ENCODE measurements at regions of chr6 and their contacts with region 1.

Region 1: GRCh38 chr6:75620381-75621304 is 19.0 kb downstream of the SENP6 start:
- DNase-seq: no peak
- ATAC-seq: peak; percentile 20
- H3K4me3 ChIP-seq: no peak overlapping the region
- H3K4me3 Mint-ChIP-seq: peak overlapping the region; percentile 30
- H3K27ac ChIP-seq: peak overlapping the region in 1 of 2 experiments; percentile 6
- H3K27ac Mint-ChIP-seq: peak overlapping the region; percentile 85
- H3K4me1 ChIP-seq: peaks cover 33% of the 10 kb centered on the region
- H3K4me1 Mint-ChIP-seq: peaks cover 67% of the 10 kb centered on the region
- H3K27me3 ChIP-seq: no peaks in the 10 kb centered on the region
- H3K27me3 Mint-ChIP-seq: no peaks in the 10 kb centered on the region
- CTCF ChIP-seq: no peak

Region 2: DNA sequence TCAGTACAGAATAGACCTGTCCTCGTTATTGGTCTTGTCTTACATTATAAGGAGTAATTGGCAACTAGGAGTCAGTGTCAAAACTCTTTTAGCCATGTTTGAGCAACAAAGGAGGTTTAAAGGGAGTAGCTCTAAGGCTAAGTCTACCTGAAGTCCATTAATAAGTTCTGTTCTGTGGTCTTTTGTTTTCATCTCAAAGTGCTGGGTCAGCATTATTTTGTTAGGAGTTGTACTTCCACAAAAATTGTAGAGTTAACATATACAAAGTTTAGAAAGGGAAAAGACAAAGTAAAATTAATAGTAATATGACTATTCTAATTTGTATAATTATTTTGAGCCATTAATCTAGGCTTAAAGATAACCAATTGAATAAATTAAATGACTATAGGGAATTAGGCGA is 31.7 kb before region 1 on chr6:
- CTCF ChIA-PET with region 1: interaction called, 3 read pairs
- POLR2A ChIA-PET with region 1: no interaction called
- intact Hi-C with region 1: loop called (anchors 5 kb)
- DNase-seq: no peak
- ATAC-seq: no peak
- H3K4me3 ChIP-seq: no peak overlapping the region
- H3K4me3 Mint-ChIP-seq: no peak overlapping the region
- H3K27ac ChIP-seq: no peak overlapping the region
- H3K27ac Mint-ChIP-seq: no peak overlapping the region
- H3K4me1 ChIP-seq: no peaks in the 10 kb centered on the region
- H3K4me1 Mint-ChIP-seq: no peaks in the 10 kb centered on the region
- H3K27me3 ChIP-seq: no peaks in the 10 kb centered on the region
- H3K27me3 Mint-ChIP-seq: no peaks in the 10 kb centered on the region
- CTCF ChIP-seq: no peak

Region 3: DNA sequence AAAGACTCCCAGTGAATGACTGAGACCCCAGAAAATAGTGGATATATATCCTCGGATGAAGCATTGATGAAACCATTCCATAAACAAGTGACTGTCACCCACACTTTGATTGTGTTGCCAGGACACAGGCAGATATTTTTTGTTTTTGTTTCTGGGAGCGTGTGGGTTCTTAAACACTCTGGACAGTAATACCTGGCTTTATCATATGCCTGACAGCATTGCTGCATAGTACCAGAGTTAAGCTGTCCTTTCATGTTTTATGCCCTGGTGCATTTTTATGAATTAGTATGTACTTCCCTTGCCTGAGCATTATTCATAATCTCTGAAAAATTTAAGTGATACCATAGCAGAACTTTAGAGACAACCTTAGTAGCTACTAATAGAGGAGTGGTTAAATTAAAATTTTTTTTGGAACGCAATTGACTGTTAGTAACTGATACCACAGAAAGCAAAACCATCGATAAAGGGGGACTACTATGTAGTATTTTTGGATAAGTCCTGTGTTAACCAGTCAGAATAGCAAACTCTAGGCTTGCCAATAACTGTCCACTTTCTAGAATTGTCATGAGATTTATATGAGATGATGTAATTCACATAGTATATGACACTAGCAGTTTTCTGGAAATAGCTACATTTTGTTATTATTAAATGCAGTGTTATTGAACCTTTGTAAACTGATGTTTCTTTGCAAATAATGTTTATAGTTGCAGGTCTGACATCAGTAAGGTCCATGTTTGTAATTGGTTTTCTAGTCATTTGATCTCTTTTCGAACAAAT is 11.4 kb after region 1 on chr6:
- CTCF ChIA-PET with region 1: interaction called, 4 read pairs
- POLR2A ChIA-PET with region 1: no interaction called
- intact Hi-C with region 1: loop called in 1 of 2 experiments (anchors 2 kb)
- DNase-seq: no peak
- ATAC-seq: no peak
- H3K4me3 ChIP-seq: no peak overlapping the region
- H3K4me3 Mint-ChIP-seq: no peak overlapping the region
- H3K27ac ChIP-seq: no peak overlapping the region
- H3K27ac Mint-ChIP-seq: peak overlapping the region; percentile 25
- H3K4me1 ChIP-seq: no peaks in the 10 kb centered on the region
- H3K4me1 Mint-ChIP-seq: peaks cover 25% of the 10 kb centered on the region
- H3K27me3 ChIP-seq: no peaks in the 10 kb centered on the region
- H3K27me3 Mint-ChIP-seq: no peaks in the 10 kb centered on the region
- CTCF ChIP-seq: no peak

Region 4: GRCh38 chr6:75656479-75656878 is 35.8 kb after region 1 on chr6:
- CTCF ChIA-PET with region 1: no interaction called
- POLR2A ChIA-PET with region 1: no interaction called
- intact Hi-C with region 1: loop called in 1 of 2 experiments (anchors 5 kb)
- DNase-seq: no peak
- ATAC-seq: no peak
- H3K4me3 ChIP-seq: no peak overlapping the region
- H3K4me3 Mint-ChIP-seq: no peak overlapping the region
- H3K27ac ChIP-seq: no peak overlapping the region
- H3K27ac Mint-ChIP-seq: peak overlapping the region; percentile 41
- H3K4me1 ChIP-seq: no peaks in the 10 kb centered on the region
- H3K4me1 Mint-ChIP-seq: no peaks in the 10 kb centered on the region
- H3K27me3 ChIP-seq: no peaks in the 10 kb centered on the region
- H3K27me3 Mint-ChIP-seq: no peaks in the 10 kb centered on the region
- CTCF ChIP-seq: no peak